ENCODE measurements at regions of chr3 and their contacts with region 1.

Region 1: DNA sequence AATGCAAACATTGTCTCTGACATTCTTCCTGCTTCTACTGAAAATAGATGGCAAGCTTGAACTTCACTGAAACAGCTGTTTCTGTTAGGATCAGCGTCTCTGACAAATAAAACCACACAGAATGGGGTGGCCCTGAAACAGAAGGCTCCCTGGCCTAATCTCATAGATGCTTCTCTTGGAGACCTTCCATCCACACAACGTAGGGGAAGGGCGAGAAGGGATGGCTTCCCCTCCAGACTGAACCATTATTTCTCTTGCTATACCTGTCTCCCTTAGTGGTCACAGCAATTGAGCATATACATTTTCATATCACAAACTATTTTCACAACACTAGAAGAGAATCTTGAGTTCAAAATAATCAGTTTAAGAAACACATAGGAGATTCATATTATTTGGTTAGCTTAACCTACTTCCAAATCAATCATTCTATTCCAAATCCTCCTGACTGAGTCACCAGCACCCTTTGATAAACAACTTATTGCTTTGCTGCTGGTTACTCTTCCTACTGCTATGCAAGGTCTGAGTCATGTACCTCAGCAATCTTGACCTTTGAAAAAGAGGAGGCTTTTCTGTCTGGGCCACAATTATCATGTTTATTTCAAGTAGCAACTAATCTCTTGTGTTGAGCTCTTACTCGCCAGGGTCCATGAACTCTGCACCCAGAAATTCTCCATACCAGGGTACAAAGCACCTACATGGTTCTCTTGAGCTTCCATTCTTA is 45.5 kb downstream of the CBLB start:
- DNase-seq: peak in 1 of 5 donors; percentile 39
- H3K4me3 ChIP-seq: no peak overlapping the region
- H3K4me3 Mint-ChIP-seq: peak overlapping the region in 4 of 8 donors; percentile 0 to 63 (median 11)
- H3K27ac ChIP-seq: no peak overlapping the region
- H3K27ac Mint-ChIP-seq: peak overlapping the region; percentile 48 to 73 (median 62)
- H3K4me1 ChIP-seq: peaks cover 40% of the 10 kb centered on the region
- H3K4me1 Mint-ChIP-seq: peaks cover 48 to 74% (median 57%) of the 10 kb centered on the region in 4 donors
- H3K27me3 ChIP-seq: no peaks in the 10 kb centered on the region
- H3K27me3 Mint-ChIP-seq: no peaks in the 10 kb centered on the region

Region 2: GRCh38 chr3:105806361-105806760 is 16.9 kb before region 1 on chr3:
- CTCF ChIA-PET with region 1: interaction called, 3 read pairs
- POLR2A ChIA-PET with region 1: interaction called, 3 read pairs
- intact Hi-C with region 1: loop called (anchors 2 kb)
- DNase-seq: peak in 4 of 5 donors; percentile 50 to 79 (median 62)
- H3K4me3 ChIP-seq: no peak overlapping the region
- H3K4me3 Mint-ChIP-seq: peak overlapping the region in 5 of 8 donors; percentile 0 to 48 (median 3)
- H3K27ac ChIP-seq: no peak overlapping the region
- H3K27ac Mint-ChIP-seq: peak overlapping the region; percentile 35 to 89 (median 76)
- H3K4me1 ChIP-seq: peaks cover 59% of the 10 kb centered on the region
- H3K4me1 Mint-ChIP-seq: peaks cover 46 to 72% (median 54%) of the 10 kb centered on the region in 4 donors
- H3K27me3 ChIP-seq: no peaks in the 10 kb centered on the region
- H3K27me3 Mint-ChIP-seq: no peaks in the 10 kb centered on the region

Region 3: GRCh38 chr3:105836533-105836932 is 13.2 kb after region 1 on chr3:
- CTCF ChIA-PET with region 1: interaction called, 4 read pairs
- POLR2A ChIA-PET with region 1: interaction called, 6 read pairs
- intact Hi-C with region 1: loop called (anchors 2 kb)
- DNase-seq: peak in 1 of 5 donors; percentile 43
- H3K4me3 ChIP-seq: peak overlapping the region; percentile 6 to 33
- H3K4me3 Mint-ChIP-seq: peak overlapping the region; percentile 71 to 88 (median 82)
- H3K27ac ChIP-seq: peak overlapping the region; percentile 16
- H3K27ac Mint-ChIP-seq: peak overlapping the region; percentile 22 to 94 (median 89)
- H3K4me1 ChIP-seq: peaks cover 69% of the 10 kb centered on the region
- H3K4me1 Mint-ChIP-seq: peaks cover 55 to 84% (median 69%) of the 10 kb centered on the region in 4 donors
- H3K27me3 ChIP-seq: no peaks in the 10 kb centered on the region
- H3K27me3 Mint-ChIP-seq: no peaks in the 10 kb centered on the region

Region 4: GRCh38 chr3:105915524-105915923 is 92.2 kb after region 1 on chr3:
- CTCF ChIA-PET with region 1: no interaction called
- POLR2A ChIA-PET with region 1: no interaction called
- intact Hi-C with region 1: no loop called
- DNase-seq: no peak
- H3K4me3 ChIP-seq: no peak overlapping the region
- H3K4me3 Mint-ChIP-seq: no peak overlapping the region
- H3K27ac ChIP-seq: no peak overlapping the region
- H3K27ac Mint-ChIP-seq: no peak overlapping the region
- H3K4me1 ChIP-seq: no peaks in the 10 kb centered on the region
- H3K4me1 Mint-ChIP-seq: peaks cover 5 to 15% (median 11%) of the 10 kb centered on the region in 4 donors
- H3K27me3 ChIP-seq: no peaks in the 10 kb centered on the region
- H3K27me3 Mint-ChIP-seq: no peaks in the 10 kb centered on the region

Region 5: DNA sequence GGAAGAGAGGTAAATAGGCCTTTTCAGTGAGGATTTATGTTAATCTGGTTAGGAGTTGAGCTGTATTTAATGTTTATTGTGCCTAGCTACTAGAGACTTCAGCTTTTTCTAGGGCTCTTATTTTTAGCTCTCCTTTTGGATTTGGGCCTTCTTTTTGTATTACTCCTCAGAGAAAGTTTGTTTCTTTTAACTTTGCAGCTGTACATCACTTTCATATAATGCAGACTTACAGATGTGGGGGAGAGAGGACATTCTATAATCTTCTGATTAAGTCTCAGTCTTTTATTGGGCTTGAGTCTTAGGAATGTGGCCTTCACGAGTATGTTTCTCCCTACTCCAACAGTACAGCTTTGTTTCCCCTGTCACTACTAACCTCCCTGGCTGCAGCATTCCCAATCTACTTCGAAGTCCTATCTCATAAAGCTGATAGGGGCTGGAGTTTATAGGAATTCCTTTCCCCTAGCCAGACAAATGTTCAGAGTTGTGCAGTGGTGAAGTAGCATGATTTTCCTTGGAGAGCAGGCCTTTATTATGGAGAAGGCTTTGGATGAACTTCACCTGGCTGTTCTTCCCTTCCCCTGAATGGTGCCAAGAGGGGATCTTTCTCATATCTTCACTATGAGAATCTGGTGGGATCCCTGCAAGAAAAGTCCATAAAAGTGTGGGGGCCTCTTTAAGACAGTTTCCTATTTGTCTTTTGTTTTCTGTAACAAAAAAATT is 127.7 kb after region 1 on chr3:
- CTCF ChIA-PET with region 1: no interaction called
- POLR2A ChIA-PET with region 1: no interaction called
- intact Hi-C with region 1: no loop called
- DNase-seq: no peak
- H3K4me3 ChIP-seq: no peak overlapping the region
- H3K4me3 Mint-ChIP-seq: peak overlapping the region in 1 of 8 donors; percentile 9
- H3K27ac ChIP-seq: no peak overlapping the region
- H3K27ac Mint-ChIP-seq: no peak overlapping the region
- H3K4me1 ChIP-seq: no peaks in the 10 kb centered on the region
- H3K4me1 Mint-ChIP-seq: no peaks in the 10 kb centered on the region
- H3K27me3 ChIP-seq: no peaks in the 10 kb centered on the region
- H3K27me3 Mint-ChIP-seq: no peaks in the 10 kb centered on the region

Measured in CD4-positive, alpha-beta memory T cell (primary cell).